ENCODE measurements at regions of chr1 and their contacts with region 1.

Region 1: DNA sequence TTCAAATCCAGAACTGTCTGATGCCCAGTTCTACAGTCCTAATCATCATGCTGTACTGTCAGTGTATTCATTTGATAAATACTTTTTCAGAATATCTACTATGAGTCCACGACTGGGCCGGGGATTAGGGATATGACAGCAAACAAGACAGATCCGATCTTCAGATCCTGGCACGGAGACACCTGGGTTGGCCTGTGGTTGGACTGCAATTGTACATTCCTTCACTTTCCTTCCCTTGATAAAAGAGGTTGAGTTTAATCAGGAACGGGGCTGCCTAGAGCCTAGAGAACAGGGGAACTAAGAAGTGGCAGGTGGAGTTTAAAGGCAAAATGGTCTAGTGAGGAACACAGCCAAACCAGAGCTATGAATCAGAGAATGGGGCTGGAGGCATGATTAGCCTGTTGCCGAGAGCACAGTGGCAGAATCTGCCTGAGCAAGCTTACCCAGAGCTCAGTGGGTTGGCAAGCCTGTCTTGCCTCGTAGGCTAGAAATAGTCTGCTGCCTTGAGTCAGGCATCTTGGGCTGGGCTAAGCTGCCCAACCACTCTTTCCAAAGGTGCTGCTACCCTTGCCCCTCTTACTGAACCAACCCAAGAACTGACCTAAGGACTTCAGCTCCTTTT is 38.1 kb upstream of the PTCH2 start:
- DNase-seq: no peak
- H3K4me3 ChIP-seq: no peak overlapping the region
- H3K4me3 Mint-ChIP-seq: no peak overlapping the region
- H3K27ac ChIP-seq: no peak overlapping the region
- H3K27ac Mint-ChIP-seq: no peak overlapping the region
- H3K4me1 ChIP-seq: no peaks in the 10 kb centered on the region
- H3K4me1 Mint-ChIP-seq: no peaks in the 10 kb centered on the region
- H3K27me3 ChIP-seq: no peaks in the 10 kb centered on the region
- H3K27me3 Mint-ChIP-seq: no peaks in the 10 kb centered on the region

Region 2: GRCh38 chr1:44380666-44381177 is 500.4 kb before region 1 on chr1:
- CTCF ChIA-PET with region 1: no interaction called
- POLR2A ChIA-PET with region 1: no interaction called
- intact Hi-C with region 1: no loop called
- DNase-seq: no peak
- H3K4me3 ChIP-seq: no peak overlapping the region
- H3K4me3 Mint-ChIP-seq: no peak overlapping the region
- H3K27ac ChIP-seq: no peak overlapping the region
- H3K27ac Mint-ChIP-seq: no peak overlapping the region
- H3K4me1 ChIP-seq: no peaks in the 10 kb centered on the region
- H3K4me1 Mint-ChIP-seq: no peaks in the 10 kb centered on the region
- H3K27me3 ChIP-seq: no peaks in the 10 kb centered on the region
- H3K27me3 Mint-ChIP-seq: peaks cover 0 to 9% of the 10 kb centered on the region in 2 donors

Region 3: GRCh38 chr1:44848456-44849181 is 32.5 kb before region 1 on chr1:
- CTCF ChIA-PET with region 1: no interaction called
- POLR2A ChIA-PET with region 1: no interaction called
- intact Hi-C with region 1: no loop called
- DNase-seq: no peak
- H3K4me3 ChIP-seq: no peak overlapping the region
- H3K4me3 Mint-ChIP-seq: no peak overlapping the region
- H3K27ac ChIP-seq: no peak overlapping the region
- H3K27ac Mint-ChIP-seq: peak overlapping the region in 1 of 7 donors; percentile 29
- H3K4me1 ChIP-seq: no peaks in the 10 kb centered on the region
- H3K4me1 Mint-ChIP-seq: peaks cover 0 to 10% (median 3%) of the 10 kb centered on the region in 4 donors
- H3K27me3 ChIP-seq: no peaks in the 10 kb centered on the region
- H3K27me3 Mint-ChIP-seq: peaks cover 0 to 3% of the 10 kb centered on the region in 2 donors

Region 4: DNA sequence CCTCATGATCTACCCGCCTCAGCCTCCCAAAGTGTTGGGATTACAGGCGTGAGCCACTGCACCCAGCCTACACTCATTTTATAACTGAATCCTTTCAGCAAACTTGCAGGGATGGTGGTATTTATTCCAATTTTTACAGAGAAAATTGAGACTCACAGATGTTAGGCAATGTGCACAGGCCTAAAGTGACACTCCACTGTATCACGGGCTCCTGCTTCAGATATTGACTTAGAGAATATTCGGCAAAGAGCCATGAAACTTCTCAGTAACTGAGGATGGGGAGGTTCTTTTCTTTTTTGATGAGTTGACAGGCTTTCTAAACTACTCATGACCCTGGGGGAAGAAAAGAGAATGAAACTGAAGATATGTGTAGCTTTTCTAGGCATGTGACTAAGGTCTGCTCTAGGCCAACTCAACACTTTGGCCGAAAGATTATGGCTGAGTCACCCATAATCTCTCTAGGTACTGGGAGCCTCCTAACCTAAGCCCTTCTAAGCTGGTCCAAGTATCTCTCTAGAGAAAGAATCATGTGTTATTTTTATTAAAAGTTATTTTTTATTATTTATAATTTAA is 18.2 kb before region 1 on chr1:
- CTCF ChIA-PET with region 1: no interaction called
- POLR2A ChIA-PET with region 1: no interaction called
- intact Hi-C with region 1: no loop called
- DNase-seq: no peak
- H3K4me3 ChIP-seq: no peak overlapping the region
- H3K4me3 Mint-ChIP-seq: no peak overlapping the region
- H3K27ac ChIP-seq: no peak overlapping the region
- H3K27ac Mint-ChIP-seq: peak overlapping the region in 1 of 7 donors; percentile 60
- H3K4me1 ChIP-seq: no peaks in the 10 kb centered on the region
- H3K4me1 Mint-ChIP-seq: no peaks in the 10 kb centered on the region
- H3K27me3 ChIP-seq: no peaks in the 10 kb centered on the region
- H3K27me3 Mint-ChIP-seq: no peaks in the 10 kb centered on the region

Region 5: GRCh38 chr1:44934791-44935190 is 53.7 kb after region 1 on chr1:
- CTCF ChIA-PET with region 1: no interaction called
- POLR2A ChIA-PET with region 1: no interaction called
- intact Hi-C with region 1: loop called (anchors 10 kb)
- DNase-seq: no peak
- H3K4me3 ChIP-seq: no peak overlapping the region
- H3K4me3 Mint-ChIP-seq: no peak overlapping the region
- H3K27ac ChIP-seq: no peak overlapping the region
- H3K27ac Mint-ChIP-seq: no peak overlapping the region
- H3K4me1 ChIP-seq: no peaks in the 10 kb centered on the region
- H3K4me1 Mint-ChIP-seq: peaks cover 0 to 1% (median 0%) of the 10 kb centered on the region in 4 donors
- H3K27me3 ChIP-seq: no peaks in the 10 kb centered on the region
- H3K27me3 Mint-ChIP-seq: no peaks in the 10 kb centered on the region